Activated T-helper 1 cell treated with anti-CD3 and anti-CD28 coated beads, Interleukin-12 subunit alpha, Interleukin-12 subunit beta, Interleukin-2, Interleukin-4 antibody, amounts not matched to agents 30 ng/mL and 10 ng/mL and 1 ng/mL, durations not matched to agents 14 hours and 24 hours and 36 hours (primary cell): ENCODE measurements at regions of chr12 and their contacts with region 1.

Region 1: DNA sequence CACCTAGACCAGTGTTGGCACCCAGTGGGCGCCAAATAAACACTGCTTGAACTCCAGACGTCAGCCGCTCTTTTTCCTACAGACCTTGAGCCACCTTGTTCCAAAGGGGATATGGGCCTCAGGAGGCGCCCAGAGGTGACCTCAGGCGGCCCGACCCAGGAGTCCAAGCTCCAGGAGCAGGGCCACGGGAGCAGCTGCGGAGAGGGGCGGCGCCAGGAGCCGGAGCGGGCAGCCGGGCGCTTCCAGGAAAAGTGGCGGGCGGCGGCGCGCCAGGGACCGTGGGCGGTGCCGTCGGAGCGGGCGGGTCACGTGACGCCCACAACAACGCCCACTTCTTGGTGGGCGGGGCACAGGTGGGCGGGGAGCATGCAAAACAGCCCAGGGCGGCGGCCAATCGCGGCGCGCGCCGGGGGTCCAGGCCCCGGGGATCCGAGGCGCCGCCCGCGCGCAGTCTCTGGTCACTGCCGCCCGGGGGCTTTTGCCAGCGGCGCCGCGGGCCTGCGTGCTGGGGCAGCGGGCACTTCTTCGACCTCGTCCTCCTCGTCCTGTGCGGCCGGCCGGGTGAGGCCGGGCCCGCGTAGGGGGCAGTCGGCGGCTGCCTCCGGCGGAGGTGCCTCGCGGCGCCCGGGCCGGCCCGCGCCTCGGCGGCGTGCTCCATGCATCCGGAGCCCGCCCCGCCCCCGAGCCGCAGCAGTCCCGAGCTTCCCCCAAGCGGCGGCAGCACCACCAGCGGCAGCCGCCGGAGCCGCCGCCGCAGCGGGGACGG is at the start of gene ORAI1:
- DNase-seq: peak; percentile 96
- H3K4me3 Mint-ChIP-seq: peak within 1 kb of the TSS; percentile 92
- H3K27ac Mint-ChIP-seq: peak within 1 kb of the TSS; percentile 95
- H3K4me1 Mint-ChIP-seq: peaks cover 49% of the 10 kb centered on the region
- H3K27me3 Mint-ChIP-seq: no peaks in the 10 kb centered on the region
- total RNA-seq, gene ORAI1: 61.5 and 67.0 TPM in 2 replicates

Region 2: GRCh38 chr12:120317224-120318105 is 1308.8 kb before region 1 on chr12:
- intact Hi-C with region 1: loop called (anchors 2 kb)
- DNase-seq: peak; percentile 100
- H3K4me3 Mint-ChIP-seq: peak overlapping the region; percentile 89
- H3K27ac Mint-ChIP-seq: peak overlapping the region; percentile 92
- H3K4me1 Mint-ChIP-seq: peaks cover 16% of the 10 kb centered on the region
- H3K27me3 Mint-ChIP-seq: peaks cover 6% of the 10 kb centered on the region

Region 3: DNA sequence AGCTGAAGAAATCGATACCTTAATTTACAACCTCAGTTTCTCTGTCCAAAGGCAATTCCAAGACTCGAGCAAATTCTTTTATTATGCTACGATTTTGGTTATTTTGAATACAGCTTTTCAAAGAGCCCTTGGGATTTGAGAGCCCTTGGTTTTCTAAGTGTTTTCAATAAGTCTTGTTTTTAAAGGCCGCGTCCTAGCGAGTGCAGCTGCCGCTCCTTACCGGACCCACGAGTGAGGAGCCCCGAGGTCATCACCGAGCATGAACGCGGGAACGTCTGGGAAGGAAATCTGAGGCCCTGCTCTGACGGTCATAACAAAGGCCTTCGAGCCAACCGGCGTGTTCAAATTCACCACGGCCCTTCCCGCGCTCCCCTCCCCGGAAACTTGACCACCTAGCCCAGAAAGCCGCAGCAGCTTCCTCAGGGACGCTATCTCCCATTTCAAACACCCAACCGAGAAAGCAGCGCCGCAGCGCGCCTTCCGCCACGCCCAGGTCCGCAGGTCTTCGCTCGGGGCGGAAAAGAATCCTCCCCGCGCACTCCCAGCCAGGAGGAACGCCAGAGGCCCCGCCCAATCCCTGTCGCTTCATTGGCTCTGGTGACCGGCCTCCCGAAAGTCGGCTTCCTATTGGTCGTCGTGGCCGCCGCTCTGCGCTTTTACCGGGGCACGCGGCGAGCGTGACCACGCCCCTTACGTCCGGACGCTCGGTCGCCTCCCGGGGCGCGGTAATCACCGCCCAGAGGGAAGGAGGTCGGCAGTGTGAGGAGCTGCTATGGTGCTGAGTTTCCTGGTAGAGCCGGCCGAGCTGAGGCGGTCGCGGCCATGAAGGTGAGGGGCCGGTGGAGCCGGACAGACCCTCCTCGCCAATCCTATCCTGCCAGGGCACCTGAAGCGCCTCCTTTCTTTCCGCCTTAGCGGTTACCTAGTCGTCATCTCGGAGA is 226.6 kb before region 1 on chr12 and contains the start of gene RNF34:
- intact Hi-C with region 1: loop called (anchors 1 kb)
- DNase-seq: peak; percentile 98
- H3K4me3 Mint-ChIP-seq: peak within 1 kb of the TSS; percentile 92
- H3K27ac Mint-ChIP-seq: peak within 1 kb of the TSS; percentile 94
- H3K4me1 Mint-ChIP-seq: peaks cover 31% of the 10 kb centered on the region
- H3K27me3 Mint-ChIP-seq: no peaks in the 10 kb centered on the region
- total RNA-seq, gene RNF34: 80.6 and 83.7 TPM in 2 replicates

Region 4: GRCh38 chr12:121536899-121537813 is 89.1 kb before region 1 on chr12:
- intact Hi-C with region 1: loop called (anchors 1 kb)
- DNase-seq: peak; percentile 41
- H3K4me3 Mint-ChIP-seq: peak overlapping the region; percentile 76
- H3K27ac Mint-ChIP-seq: peak overlapping the region; percentile 12
- H3K4me1 Mint-ChIP-seq: peaks cover 34% of the 10 kb centered on the region
- H3K27me3 Mint-ChIP-seq: peaks cover 4% of the 10 kb centered on the region

Region 5: GRCh38 chr12:121637231-121637914 is 11.1 kb after region 1 on chr12:
- intact Hi-C with region 1: loop called (anchors 1 kb)
- DNase-seq: peak; percentile 37
- H3K4me3 Mint-ChIP-seq: peak overlapping the region; percentile 59
- H3K27ac Mint-ChIP-seq: peak overlapping the region; percentile 85
- H3K4me1 Mint-ChIP-seq: peaks cover 48% of the 10 kb centered on the region
- H3K27me3 Mint-ChIP-seq: no peaks in the 10 kb centered on the region

Region 6: DNA sequence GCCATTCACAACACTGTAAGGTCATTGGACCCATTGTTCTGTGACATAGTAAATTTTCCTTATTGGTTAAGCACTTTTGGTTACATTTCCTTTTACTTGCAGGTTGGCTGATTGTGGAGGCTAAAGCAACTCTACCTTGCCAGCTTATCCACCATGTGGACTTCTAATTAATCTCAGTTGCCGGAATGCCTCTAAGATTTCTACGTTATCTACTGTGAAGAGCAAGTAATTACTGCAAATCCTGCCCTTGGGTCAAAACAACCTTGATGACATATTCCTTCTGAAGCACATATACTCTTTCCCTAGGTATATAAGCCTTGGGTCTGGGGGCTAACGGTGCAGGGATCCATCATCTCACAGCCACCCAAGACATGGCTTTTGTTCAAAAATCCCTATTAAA is 62.7 kb after region 1 on chr12:
- intact Hi-C with region 1: loop called (anchors 1 kb)
- DNase-seq: no peak
- H3K4me3 Mint-ChIP-seq: no peak overlapping the region
- H3K27ac Mint-ChIP-seq: no peak overlapping the region
- H3K4me1 Mint-ChIP-seq: peaks cover 10% of the 10 kb centered on the region
- H3K27me3 Mint-ChIP-seq: peaks cover 7% of the 10 kb centered on the region

Region 7: GRCh38 chr12:121748571-121749253 is 122.4 kb after region 1 on chr12:
- intact Hi-C with region 1: no loop called
- DNase-seq: no peak
- H3K4me3 Mint-ChIP-seq: no peak overlapping the region
- H3K27ac Mint-ChIP-seq: no peak overlapping the region
- H3K4me1 Mint-ChIP-seq: no peaks in the 10 kb centered on the region
- H3K27me3 Mint-ChIP-seq: no peaks in the 10 kb centered on the region

Region 8: GRCh38 chr12:121888478-121889266 is 262.4 kb after region 1 on chr12 and contains the start of gene PSMD9:
- intact Hi-C with region 1: loop called (anchors 1 kb)
- DNase-seq: peak; percentile 98
- H3K4me3 Mint-ChIP-seq: peak within 1 kb of the TSS; percentile 99
- H3K27ac Mint-ChIP-seq: peak within 1 kb of the TSS; percentile 99
- H3K4me1 Mint-ChIP-seq: peaks cover 35% of the 10 kb centered on the region
- H3K27me3 Mint-ChIP-seq: peaks cover 2% of the 10 kb centered on the region
- total RNA-seq, gene PSMD9: 63.9 and 67.5 TPM in 2 replicates